ENCODE measurements at regions of chr17 and their contacts with region 1.

Region 1: DNA sequence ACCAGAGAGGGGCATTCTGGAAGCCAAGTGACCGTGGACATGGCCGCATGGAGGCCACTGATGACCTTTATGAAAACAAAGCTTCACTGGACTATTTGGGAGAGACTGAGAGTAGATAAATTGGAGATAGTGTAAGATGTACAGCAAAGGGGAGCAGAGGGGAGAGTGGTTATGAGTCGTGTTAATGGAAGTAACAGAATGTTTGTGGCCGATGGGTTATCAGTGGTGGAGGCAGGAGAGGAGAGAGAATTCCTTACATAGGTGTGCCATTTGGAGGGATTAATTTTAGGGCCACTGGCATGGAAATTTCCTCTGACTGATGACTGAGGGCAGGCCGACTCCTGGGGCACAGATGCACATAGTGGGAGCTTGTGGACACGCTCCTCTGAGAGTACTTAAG is 19.2 kb downstream of the PRPSAP2 start:
- DNase-seq: no peak
- H3K4me3 ChIP-seq: no peak overlapping the region
- H3K27ac ChIP-seq: no peak overlapping the region
- H3K4me1 ChIP-seq: no peaks in the 10 kb centered on the region
- CTCF ChIP-seq: no peak

Region 2: GRCh38 chr17:18896146-18896545 is 19.0 kb after region 1 on chr17:
- CTCF ChIA-PET with region 1: no interaction called
- POLR2A ChIA-PET with region 1: interaction called, 11 read pairs
- intact Hi-C with region 1: no loop called
- DNase-seq: no peak
- H3K4me3 ChIP-seq: no peak overlapping the region
- H3K27ac ChIP-seq: no peak overlapping the region
- H3K4me1 ChIP-seq: peaks cover 20% of the 10 kb centered on the region
- CTCF ChIP-seq: no peak

Measured in OCI-LY7 (cell line).